B cell (primary cell): ENCODE measurements at regions of chrX and their contacts with region 1.

Region 1: DNA sequence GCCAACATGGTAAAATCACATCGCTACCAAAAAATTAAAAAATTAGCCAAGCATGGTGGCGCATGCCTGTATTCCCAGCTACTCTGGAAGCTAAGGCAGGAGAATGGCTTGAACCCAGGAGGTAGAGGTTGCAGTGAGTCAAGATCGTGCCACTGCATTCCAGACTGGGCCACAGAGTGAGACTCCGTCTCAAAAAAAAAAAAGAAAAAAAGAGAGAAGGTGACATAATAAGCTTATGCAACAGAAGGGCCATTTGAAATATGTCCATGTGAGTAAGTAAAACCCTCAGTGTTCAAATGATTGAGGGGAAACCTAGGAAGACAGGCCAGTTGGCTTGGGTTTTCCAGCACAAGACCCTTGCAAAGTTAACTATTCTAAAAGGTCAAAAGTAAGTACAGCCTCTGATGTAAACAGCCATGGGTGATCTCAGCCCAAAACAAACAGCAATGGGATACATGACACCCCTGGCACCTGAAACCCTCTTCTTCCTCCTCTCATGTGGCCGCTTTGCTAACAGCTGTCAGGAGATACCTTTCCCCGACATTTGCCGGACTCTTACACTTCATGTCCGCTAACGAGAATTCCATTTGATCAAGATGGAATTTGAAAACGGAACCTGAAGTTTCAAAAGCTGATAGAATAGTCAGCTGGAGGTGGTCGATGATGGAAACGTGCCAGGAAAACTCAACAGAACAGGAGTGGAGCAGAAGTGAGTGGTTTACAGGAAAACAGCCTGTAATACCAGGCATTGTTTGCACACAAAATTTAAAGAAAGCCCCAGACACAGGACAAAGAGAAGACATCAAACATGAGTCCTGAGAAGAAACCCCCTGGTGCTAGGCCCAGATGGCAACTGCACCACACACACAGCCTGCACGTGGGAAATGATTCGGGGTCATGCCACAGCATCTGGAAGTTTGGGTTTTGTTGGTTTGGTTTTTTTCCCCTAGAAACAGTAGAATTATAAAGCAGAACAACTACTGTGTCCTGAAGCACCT is 93.0 kb upstream of the STS start:
- DNase-seq: no peak
- ATAC-seq: no peak
- H3K4me3 ChIP-seq: no peak overlapping the region
- H3K4me3 Mint-ChIP-seq: no peak overlapping the region
- H3K27ac ChIP-seq: peak overlapping the region; percentile 15 to 62
- H3K27ac Mint-ChIP-seq: peak overlapping the region; percentile 32
- H3K4me1 ChIP-seq: peaks cover 61 to 66% of the 10 kb centered on the region in 2 donors
- H3K4me1 Mint-ChIP-seq: peaks cover 58% of the 10 kb centered on the region
- H3K27me3 ChIP-seq: no peaks in the 10 kb centered on the region
- H3K27me3 Mint-ChIP-seq: no peaks in the 10 kb centered on the region
- CTCF ChIP-seq: no peak

Region 2: DNA sequence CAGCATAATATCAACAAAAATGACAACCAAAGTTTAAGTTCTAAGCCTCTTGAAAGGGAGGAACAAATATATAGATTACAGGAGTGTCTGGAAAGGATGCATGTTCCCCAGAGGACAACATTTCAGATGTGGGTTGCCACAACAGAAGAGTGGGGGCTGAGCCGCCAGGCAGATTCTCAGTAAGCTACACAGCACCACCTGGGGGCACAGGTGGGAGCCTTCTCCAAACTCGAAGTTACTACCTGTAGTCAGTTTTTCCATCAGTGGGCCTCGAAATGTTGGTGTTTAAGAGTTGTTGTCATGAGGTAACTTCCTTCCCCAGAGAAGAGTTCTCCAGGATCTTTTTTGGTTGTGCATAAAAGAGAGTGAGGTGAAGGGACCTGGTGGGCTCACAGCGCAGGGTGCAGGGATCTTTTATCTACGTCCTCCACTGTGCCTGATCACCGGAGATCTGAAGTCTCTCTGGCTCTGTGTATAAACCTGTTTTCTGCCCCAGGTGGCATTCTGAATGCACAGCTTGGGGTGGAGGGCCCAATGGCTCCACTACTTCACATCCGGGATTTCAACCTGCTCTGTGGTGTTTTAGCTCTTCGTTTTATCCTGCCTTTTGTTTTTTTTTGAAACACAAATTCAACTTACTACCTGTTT is 34.6 kb after region 1 on chrX:
- CTCF ChIA-PET with region 1: no interaction called
- POLR2A ChIA-PET with region 1: no interaction called
- intact Hi-C with region 1: loop called (anchors 5 kb)
- DNase-seq: peak; percentile 62
- ATAC-seq: peak; percentile 31
- H3K4me3 ChIP-seq: no peak overlapping the region
- H3K4me3 Mint-ChIP-seq: no peak overlapping the region
- H3K27ac ChIP-seq: peak overlapping the region in 1 of 2 donors; percentile 11
- H3K27ac Mint-ChIP-seq: peak overlapping the region; percentile 65
- H3K4me1 ChIP-seq: peaks cover 48 to 51% of the 10 kb centered on the region in 2 donors
- H3K4me1 Mint-ChIP-seq: peaks cover 70% of the 10 kb centered on the region
- H3K27me3 ChIP-seq: no peaks in the 10 kb centered on the region
- H3K27me3 Mint-ChIP-seq: no peaks in the 10 kb centered on the region
- CTCF ChIP-seq: peak; percentile 51

Region 3: GRCh38 chrX:7219184-7219601 is 164.7 kb after region 1 on chrX:
- CTCF ChIA-PET with region 1: no interaction called
- POLR2A ChIA-PET with region 1: no interaction called
- intact Hi-C with region 1: no loop called
- DNase-seq: no peak
- ATAC-seq: no peak
- H3K4me3 ChIP-seq: no peak overlapping the region
- H3K4me3 Mint-ChIP-seq: no peak overlapping the region
- H3K27ac ChIP-seq: no peak overlapping the region
- H3K27ac Mint-ChIP-seq: no peak overlapping the region
- H3K4me1 ChIP-seq: peaks cover 0 to 4% of the 10 kb centered on the region in 2 donors
- H3K4me1 Mint-ChIP-seq: peaks cover 8% of the 10 kb centered on the region
- H3K27me3 ChIP-seq: no peaks in the 10 kb centered on the region
- H3K27me3 Mint-ChIP-seq: no peaks in the 10 kb centered on the region
- CTCF ChIP-seq: no peak